ENCODE measurements at regions of chr22 and their contacts with region 1.

Region 1: DNA sequence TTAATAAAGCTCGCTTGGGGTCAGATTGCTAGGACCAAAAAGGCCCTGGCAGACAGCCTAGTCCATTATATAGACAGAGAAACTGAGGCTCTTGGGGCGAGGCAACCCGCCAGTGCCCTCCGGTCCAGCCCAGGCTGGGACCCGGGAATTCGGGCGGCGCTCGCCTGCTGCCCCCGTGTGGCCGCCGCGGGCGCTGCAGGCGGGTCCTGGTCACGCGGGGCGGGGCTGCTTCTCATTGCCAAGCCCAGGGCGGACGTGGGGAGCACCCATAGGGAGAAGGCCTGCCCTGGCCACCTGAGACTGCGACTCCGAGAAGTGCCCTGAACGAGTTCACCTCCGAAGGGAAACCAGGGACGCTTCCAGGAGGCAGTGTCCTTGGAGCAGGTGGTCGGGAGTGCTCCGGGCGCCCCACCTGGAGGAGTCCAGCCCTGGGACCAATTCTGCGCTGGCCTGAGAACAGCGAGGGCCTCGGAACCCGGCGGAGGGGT is 36.0 kb upstream of the CSNK1E start:
- DNase-seq: peak; percentile 23 to 85 (median 57)
- ATAC-seq: peak; percentile 96
- H3K4me3 ChIP-seq: no peak overlapping the region
- H3K4me3 Mint-ChIP-seq: no peak overlapping the region
- H3K27ac ChIP-seq: no peak overlapping the region
- H3K27ac Mint-ChIP-seq: no peak overlapping the region
- H3K4me1 ChIP-seq: no peaks in the 10 kb centered on the region
- H3K4me1 Mint-ChIP-seq: no peaks in the 10 kb centered on the region
- H3K27me3 ChIP-seq: no peaks in the 10 kb centered on the region
- H3K27me3 Mint-ChIP-seq: no peaks in the 10 kb centered on the region

Region 2: GRCh38 chr22:38040953-38041759 is 312.0 kb before region 1 on chr22:
- CTCF ChIA-PET with region 1: no interaction called
- POLR2A ChIA-PET with region 1: no interaction called
- intact Hi-C with region 1: no loop called
- DNase-seq: no peak
- ATAC-seq: no peak
- H3K4me3 ChIP-seq: no peak overlapping the region
- H3K4me3 Mint-ChIP-seq: no peak overlapping the region
- H3K27ac ChIP-seq: no peak overlapping the region
- H3K27ac Mint-ChIP-seq: no peak overlapping the region
- H3K4me1 ChIP-seq: no peaks in the 10 kb centered on the region
- H3K4me1 Mint-ChIP-seq: peaks cover 0 to 6% (median 0%) of the 10 kb centered on the region in 7 donors
- H3K27me3 ChIP-seq: no peaks in the 10 kb centered on the region
- H3K27me3 Mint-ChIP-seq: peaks cover 0 to 4% (median 0%) of the 10 kb centered on the region in 5 donors

Region 3: DNA sequence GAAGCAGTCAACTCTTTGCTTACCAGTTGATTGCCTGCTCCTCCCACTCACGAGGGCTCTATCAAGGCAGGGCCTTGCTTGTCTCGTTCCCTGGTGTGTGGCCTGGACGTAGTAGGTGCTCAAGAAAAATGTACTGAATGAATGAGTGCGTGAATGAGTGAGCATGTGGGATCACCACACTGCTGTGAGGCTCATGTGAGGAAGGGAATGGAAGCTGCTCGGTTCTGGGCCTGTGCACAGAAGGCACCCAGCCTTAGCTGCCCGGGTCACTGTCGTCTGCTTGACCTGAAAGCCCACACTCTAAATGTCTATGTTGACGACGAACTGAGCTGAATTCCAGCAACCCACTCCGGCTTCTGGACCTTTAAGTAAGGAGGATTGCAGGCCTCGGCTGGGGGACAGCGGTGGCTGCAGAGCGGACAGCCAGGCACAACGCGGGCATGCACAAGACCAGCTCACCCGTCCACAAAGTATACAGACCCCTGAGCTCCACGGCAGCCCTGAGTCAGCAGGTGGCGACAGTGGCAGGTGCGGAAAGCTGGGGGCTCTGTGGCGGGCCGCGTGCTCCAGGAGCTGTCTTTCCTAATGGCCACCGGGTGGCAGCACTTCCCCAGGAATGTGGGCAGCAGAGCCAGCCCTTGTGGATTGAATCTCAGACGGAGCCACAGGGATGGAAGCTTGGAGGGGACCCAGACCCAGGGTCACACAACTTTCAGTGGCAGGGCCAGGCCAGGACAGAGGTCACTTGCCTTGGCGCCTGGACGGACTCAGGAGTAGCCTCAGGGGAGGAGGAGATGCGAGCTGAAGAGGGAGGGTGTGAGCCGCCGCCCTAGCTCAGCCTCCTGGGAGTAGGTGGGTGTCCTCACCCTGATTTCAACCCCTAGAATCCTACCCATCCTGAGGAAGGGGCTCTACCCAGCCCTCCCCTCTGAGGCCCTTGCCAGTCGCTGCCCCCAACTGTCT is 301.0 kb before region 1 on chr22:
- CTCF ChIA-PET with region 1: interaction called, 3 read pairs
- POLR2A ChIA-PET with region 1: interaction called, 4 read pairs
- intact Hi-C with region 1: loop called in 1 of 2 experiments (anchors 1 kb)
- DNase-seq: peak; percentile 59 to 75 (median 69)
- ATAC-seq: peak; percentile 88
- H3K4me3 ChIP-seq: no peak overlapping the region
- H3K4me3 Mint-ChIP-seq: peak overlapping the region in 2 of 10 donors; percentile 13 to 51
- H3K27ac ChIP-seq: no peak overlapping the region
- H3K27ac Mint-ChIP-seq: peak overlapping the region in 2 of 9 donors; percentile 38 to 71
- H3K4me1 ChIP-seq: peaks cover 10 to 11% of the 10 kb centered on the region in 2 donors
- H3K4me1 Mint-ChIP-seq: peaks cover 0 to 14% (median 9%) of the 10 kb centered on the region in 7 donors
- H3K27me3 ChIP-seq: no peaks in the 10 kb centered on the region
- H3K27me3 Mint-ChIP-seq: peaks cover 0 to 28% (median 8%) of the 10 kb centered on the region in 5 donors

Region 4: DNA sequence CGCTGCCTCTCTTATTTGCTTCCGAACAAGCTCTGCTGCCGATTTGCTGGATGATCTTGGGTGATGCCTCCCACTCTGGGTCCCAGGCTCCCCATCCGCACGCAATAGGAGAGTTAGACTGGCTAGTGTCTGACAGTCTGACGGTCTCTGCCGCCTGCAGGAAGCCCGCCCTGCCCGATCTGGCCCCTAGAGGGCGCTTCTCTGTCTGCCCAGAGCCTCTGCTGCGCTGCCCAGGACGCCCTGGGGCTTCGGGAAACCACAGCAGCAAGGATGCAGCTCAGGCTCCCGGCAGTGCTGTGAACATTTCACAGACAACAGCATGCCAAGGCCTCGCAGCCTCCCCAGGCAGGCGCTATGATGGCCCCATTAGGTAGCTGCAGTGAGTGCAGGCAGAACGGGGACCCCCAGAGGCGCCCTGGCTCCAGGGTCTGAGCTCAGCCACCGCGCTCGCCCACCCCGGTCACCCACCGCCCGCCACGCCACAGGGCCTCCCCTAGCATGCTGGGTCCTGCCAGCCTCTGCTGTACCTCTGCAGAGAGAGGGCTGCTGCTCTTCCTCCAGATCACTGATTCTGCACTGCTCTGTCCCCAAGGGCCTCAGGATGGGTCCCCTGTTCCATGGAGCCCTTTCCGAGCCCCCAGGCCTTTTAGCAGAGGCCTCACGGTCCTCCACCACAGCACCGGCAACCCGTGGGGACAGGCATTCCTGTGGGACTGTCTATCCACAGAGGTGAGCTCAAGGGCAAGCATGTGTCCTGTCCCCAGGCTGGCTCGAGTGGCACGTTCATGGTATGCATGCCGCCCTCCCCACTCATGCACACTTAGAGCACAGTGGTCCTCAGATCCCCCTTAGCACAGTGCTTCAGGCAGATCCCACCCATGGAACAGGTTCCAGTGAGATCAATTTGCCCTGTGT is 238.4 kb before region 1 on chr22:
- CTCF ChIA-PET with region 1: no interaction called
- POLR2A ChIA-PET with region 1: no interaction called
- intact Hi-C with region 1: loop called (anchors 1 to 5 kb)
- DNase-seq: peak; percentile 42 to 83 (median 67)
- ATAC-seq: peak; percentile 92
- H3K4me3 ChIP-seq: no peak overlapping the region
- H3K4me3 Mint-ChIP-seq: peak overlapping the region in 1 of 10 donors; percentile 41
- H3K27ac ChIP-seq: no peak overlapping the region
- H3K27ac Mint-ChIP-seq: peak overlapping the region in 2 of 9 donors; percentile 57 to 81
- H3K4me1 ChIP-seq: no peaks in the 10 kb centered on the region
- H3K4me1 Mint-ChIP-seq: peaks cover 0 to 6% (median 4%) of the 10 kb centered on the region in 7 donors
- H3K27me3 ChIP-seq: no peaks in the 10 kb centered on the region
- H3K27me3 Mint-ChIP-seq: no peaks in the 10 kb centered on the region

Region 5: DNA sequence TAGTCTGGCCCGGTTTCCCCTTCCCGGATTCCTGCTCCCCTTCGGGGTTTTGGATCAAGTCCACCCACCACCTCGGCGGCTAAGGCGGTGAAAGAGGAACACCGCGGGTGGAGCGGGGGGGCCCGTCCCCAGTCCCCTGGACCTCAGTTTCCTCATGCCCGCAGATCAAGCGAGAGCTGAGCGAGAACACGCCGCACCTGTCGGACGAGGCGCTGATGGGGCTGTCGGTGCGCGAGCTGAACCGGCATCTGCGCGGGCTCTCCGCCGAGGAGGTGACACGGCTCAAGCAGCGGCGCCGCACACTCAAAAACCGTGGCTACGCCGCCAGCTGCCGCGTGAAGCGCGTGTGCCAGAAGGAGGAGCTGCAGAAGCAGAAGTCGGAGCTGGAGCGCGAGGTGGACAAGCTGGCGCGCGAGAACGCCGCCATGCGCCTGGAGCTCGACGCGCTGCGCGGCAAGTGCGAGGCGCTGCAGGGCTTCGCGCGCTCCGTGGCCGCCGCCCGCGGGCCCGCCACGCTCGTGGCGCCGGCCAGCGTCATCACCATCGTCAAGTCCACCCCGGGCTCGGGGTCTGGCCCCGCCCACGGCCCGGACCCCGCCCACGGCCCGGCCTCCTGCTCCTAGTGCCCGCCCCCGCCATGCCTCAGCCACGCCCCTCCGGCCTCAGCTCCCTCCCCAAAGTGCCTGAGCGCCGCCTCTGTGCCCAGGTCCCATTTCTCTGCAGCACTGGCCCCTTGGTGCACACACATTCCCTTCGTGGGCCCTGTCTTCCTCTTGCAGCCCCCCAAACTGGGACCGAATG is 138.7 kb before region 1 on chr22:
- CTCF ChIA-PET with region 1: no interaction called
- POLR2A ChIA-PET with region 1: no interaction called
- intact Hi-C with region 1: loop called in 1 of 2 experiments (anchors 1 kb)
- DNase-seq: peak; percentile 54 to 78 (median 69)
- ATAC-seq: peak; percentile 82
- H3K4me3 ChIP-seq: peak overlapping the region; percentile 30
- H3K4me3 Mint-ChIP-seq: peak overlapping the region in 9 of 10 donors; percentile 9 to 76 (median 69)
- H3K27ac ChIP-seq: peak overlapping the region; percentile 39
- H3K27ac Mint-ChIP-seq: peak overlapping the region in 3 of 9 donors; percentile 44 to 77 (median 57)
- H3K4me1 ChIP-seq: peaks cover 6 to 12% of the 10 kb centered on the region in 2 donors
- H3K4me1 Mint-ChIP-seq: peaks cover 11 to 30% (median 15%) of the 10 kb centered on the region in 7 donors
- H3K27me3 ChIP-seq: no peaks in the 10 kb centered on the region
- H3K27me3 Mint-ChIP-seq: no peaks in the 10 kb centered on the region

Region 6: GRCh38 chr22:38262051-38262795 is 91.0 kb before region 1 on chr22:
- CTCF ChIA-PET with region 1: interaction called, 3 read pairs
- POLR2A ChIA-PET with region 1: no interaction called
- intact Hi-C with region 1: loop called in 1 of 2 experiments (anchors 1 kb)
- DNase-seq: peak in 5 of 9 donors; percentile 18 to 39 (median 20)
- ATAC-seq: peak; percentile 47
- H3K4me3 ChIP-seq: no peak overlapping the region
- H3K4me3 Mint-ChIP-seq: peak overlapping the region in 1 of 10 donors; percentile 53
- H3K27ac ChIP-seq: no peak overlapping the region
- H3K27ac Mint-ChIP-seq: peak overlapping the region in 2 of 9 donors; percentile 15 to 63
- H3K4me1 ChIP-seq: peaks cover 10 to 28% of the 10 kb centered on the region in 2 donors
- H3K4me1 Mint-ChIP-seq: peaks cover 27 to 75% (median 65%) of the 10 kb centered on the region in 7 donors
- H3K27me3 ChIP-seq: no peaks in the 10 kb centered on the region
- H3K27me3 Mint-ChIP-seq: no peaks in the 10 kb centered on the region

Region 7: DNA sequence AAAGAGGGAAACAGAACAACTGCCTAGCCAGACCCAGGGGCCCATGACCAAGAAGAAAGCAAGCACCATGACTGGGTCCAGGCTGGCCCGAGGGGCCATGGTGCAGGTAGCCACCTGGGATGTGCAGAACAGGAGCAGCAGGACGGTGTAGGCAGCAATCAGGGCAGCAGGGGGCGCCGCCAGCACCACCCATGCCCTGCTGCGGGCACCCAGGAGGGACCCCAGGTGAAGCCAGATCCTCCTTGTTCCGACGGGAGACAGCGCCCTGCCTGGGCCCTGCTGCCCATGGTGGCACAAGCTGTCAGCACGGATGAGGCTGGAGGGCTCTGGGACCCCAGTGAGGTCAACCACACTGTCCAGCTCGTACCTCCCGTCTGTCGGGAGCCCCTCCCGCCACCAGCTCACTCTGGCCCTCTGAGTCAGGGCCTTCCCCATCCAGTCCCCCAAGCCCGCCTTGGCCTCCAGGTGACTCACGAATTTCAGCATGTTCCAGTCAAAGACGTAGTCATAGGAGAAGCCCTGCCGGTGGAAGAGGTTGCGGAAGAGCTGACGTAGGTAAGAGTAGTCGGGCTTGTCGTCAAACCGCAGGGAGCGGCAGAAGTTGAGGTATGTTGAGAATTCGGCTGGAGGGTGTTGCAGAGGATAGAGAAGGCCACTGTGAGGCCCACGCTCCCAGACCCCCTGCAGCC is 54.7 kb before region 1 on chr22:
- CTCF ChIA-PET with region 1: no interaction called
- POLR2A ChIA-PET with region 1: no interaction called
- intact Hi-C with region 1: loop called (anchors 1 to 2 kb)
- DNase-seq: peak in 7 of 9 donors; percentile 38 to 51 (median 43)
- ATAC-seq: peak; percentile 71
- H3K4me3 ChIP-seq: no peak overlapping the region
- H3K4me3 Mint-ChIP-seq: no peak overlapping the region
- H3K27ac ChIP-seq: no peak overlapping the region
- H3K27ac Mint-ChIP-seq: no peak overlapping the region
- H3K4me1 ChIP-seq: no peaks in the 10 kb centered on the region
- H3K4me1 Mint-ChIP-seq: no peaks in the 10 kb centered on the region
- H3K27me3 ChIP-seq: no peaks in the 10 kb centered on the region
- H3K27me3 Mint-ChIP-seq: no peaks in the 10 kb centered on the region

Region 8: DNA sequence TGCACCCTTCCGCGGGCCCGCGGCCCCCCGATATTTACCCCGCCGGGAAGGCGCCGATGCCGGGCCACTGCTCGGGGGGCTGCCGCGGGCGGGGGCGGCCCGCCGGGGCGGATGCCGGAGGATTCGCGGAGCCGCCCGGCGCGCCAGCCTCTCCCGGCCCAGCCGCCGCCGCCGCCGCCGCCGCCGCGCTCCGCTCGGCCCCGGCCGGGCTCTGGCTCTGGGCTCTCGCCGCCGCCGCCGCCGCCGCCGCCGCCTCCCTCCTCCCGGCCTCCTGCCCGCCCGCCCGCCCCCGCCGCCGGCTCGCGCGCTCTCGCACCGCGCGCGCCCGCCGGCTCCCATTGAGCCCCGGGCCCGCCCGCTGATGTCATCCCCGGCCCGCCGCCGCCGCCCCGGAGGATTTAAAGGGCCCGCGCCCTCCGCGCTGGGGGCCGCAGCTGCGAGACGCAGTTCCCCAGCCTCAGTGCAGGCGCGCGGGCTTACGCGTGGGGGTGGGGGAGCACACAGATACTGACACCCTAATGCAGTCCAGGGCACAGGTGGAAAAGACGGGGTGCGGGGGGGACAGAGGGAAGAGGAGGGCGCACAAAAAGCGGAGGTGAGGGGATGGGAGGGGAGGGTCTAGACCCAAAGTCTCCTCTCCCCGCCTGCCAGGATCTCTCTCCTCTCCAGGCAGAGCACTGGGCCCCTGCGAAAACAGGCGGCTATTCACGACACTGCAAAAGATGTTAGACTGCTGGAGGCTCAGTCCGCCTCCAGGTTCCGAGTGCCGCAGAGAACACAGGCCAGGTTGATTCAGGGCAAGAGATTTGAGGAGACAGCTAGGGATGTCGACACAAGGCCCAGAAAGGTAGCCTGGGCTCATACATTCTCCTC is 35.8 kb before region 1 on chr22 and contains the start of gene CSNK1E:
- CTCF ChIA-PET with region 1: no interaction called
- POLR2A ChIA-PET with region 1: no interaction called
- intact Hi-C with region 1: loop called in 1 of 2 experiments (anchors 5 kb)
- DNase-seq: peak; percentile 67 to 85 (median 74)
- ATAC-seq: peak; percentile 79
- H3K4me3 ChIP-seq: peak within 1 kb of the TSS; percentile 62
- H3K4me3 Mint-ChIP-seq: peak within 1 kb of the TSS; percentile 84 to 92 (median 89)
- H3K27ac ChIP-seq: peak within 1 kb of the TSS; percentile 91
- H3K27ac Mint-ChIP-seq: peak within 1 kb of the TSS; percentile 94 to 97 (median 95)
- H3K4me1 ChIP-seq: peaks cover 28 to 39% of the 10 kb centered on the region in 2 donors
- H3K4me1 Mint-ChIP-seq: peaks cover 31 to 49% (median 42%) of the 10 kb centered on the region in 7 donors
- H3K27me3 ChIP-seq: no peaks in the 10 kb centered on the region
- H3K27me3 Mint-ChIP-seq: no peaks in the 10 kb centered on the region
- total RNA-seq, gene CSNK1E: 71.6 to 143 (median 91.9) TPM

Measured in naive thymus-derived CD4-positive, alpha-beta T cell (primary cell).